ENCODE measurements at regions of chr9 and their contacts with region 1.

Region 1: GRCh38 chr9:94672811-94673487 is 33.6 kb upstream of the FBP1 start:
- DNase-seq: no peak
- ATAC-seq: no peak
- H3K4me3 ChIP-seq: no peak overlapping the region
- H3K27ac ChIP-seq: no peak overlapping the region
- H3K4me1 ChIP-seq: peaks cover 0 to 27% (median 16%) of the 10 kb centered on the region in 12 donors
- H3K27me3 ChIP-seq: no peaks in the 10 kb centered on the region
- CTCF ChIP-seq: no peak
- POLR2A ChIP-seq: no peak

Region 2: DNA sequence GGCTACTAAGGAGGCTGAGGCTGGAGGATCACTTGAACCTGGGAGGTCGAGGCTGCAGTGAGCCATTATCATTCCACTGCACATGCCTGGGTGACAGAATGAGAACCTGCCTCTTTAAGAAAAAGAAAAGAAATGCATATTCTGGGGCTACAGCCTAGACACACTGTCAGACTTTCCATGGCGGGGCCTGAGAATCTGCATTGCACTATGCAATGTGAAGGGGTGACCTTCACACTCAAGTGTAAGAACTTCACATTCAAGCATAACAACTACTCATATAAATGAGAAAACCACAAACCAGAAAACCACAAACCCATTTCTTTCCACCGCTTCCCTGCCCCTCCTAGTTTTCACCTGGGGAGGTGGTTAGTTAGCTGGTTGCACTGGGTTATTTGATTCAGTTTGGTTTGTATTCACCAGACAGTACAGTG is 61.3 kb before region 1 on chr9:
- intact Hi-C with region 1: no loop called
- DNase-seq: no peak
- ATAC-seq: no peak
- H3K4me3 ChIP-seq: no peak overlapping the region
- H3K27ac ChIP-seq: no peak overlapping the region
- H3K4me1 ChIP-seq: peaks cover 0 to 4% (median 0%) of the 10 kb centered on the region in 12 donors
- H3K27me3 ChIP-seq: peaks cover 0 to 5% (median 0%) of the 10 kb centered on the region in 9 donors
- CTCF ChIP-seq: no peak
- POLR2A ChIP-seq: no peak

Region 3: DNA sequence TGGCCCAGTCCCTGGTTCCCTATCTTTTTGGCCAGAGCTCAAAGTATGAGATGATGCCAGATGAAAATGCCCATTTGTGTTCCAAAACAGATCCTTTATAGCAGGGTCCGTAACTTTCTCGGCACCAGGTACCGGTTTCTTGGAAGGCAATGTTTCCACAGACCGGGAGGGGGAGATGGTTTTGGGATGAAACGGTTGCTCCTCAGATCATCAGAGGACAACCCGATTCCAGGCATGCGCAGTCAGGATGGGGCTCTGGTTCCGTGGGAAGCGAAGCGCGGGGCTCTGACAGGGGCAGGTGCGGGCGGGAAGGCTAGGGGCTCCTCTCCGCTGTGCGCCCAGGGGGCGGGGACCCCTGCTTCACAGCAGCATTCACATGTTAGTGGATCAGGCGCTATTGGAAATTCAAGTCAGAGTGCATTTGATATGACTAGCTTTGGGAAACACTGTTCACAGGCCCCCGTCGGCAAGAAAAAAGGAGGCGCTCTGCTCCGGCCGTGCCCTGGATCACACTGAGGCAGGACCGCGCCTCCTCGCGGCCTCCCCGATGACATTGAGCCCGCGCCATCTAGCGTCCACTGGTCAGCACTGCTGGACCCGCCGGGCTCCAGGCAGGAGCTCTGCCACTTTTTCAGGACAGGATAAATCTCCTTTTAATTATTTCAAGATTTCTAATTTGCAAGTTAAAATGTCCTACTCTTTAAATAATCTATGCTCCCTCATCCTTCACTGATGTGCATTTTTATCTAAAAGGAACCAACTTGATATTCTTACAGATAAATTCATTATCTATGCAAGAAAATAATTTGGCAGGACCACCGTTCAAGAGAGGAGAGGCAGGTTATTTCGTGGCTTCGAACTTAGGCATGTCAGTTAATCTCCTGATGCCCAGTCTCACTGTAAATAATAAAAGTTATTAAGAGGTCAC is 454.6 kb after region 1 on chr9:
- intact Hi-C with region 1: loop called in 2 of 10 experiments (anchors 5 kb)
- DNase-seq: peak; percentile 86 to 92 (median 88)
- ATAC-seq: peak; percentile 83 to 91 (median 89)
- H3K4me3 ChIP-seq: peak overlapping the region in 11 of 12 donors; percentile 8 to 58 (median 45)
- H3K27ac ChIP-seq: peak overlapping the region in 4 of 12 donors; percentile 25 to 59 (median 48)
- H3K4me1 ChIP-seq: peaks cover 0 to 24% (median 8%) of the 10 kb centered on the region in 12 donors
- H3K27me3 ChIP-seq: no peaks in the 10 kb centered on the region
- CTCF ChIP-seq: peak; percentile 92 to 99 (median 98)
- POLR2A ChIP-seq: no peak

Region 4: DNA sequence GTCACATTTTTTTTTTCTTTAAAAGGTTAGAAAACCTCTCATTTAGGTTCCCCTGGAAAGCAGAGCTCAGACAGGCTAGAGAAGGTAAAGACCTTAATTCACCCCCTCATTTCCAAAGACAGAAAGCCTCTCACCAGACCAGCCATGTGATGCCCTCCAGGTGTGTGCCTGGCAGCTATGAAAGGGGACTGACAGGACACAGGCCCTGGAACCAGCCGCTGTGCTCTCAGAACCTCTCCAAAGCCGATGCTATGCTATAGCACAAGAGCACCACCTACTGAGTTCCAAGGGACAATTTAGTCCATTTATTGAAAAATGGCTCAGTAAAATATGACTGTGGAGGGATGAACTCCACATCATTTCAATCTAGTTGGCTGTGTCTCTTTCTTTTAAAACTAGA is 595.7 kb after region 1 on chr9:
- intact Hi-C with region 1: loop called in 3 of 10 experiments (anchors 5 to 10 kb)
- DNase-seq: peak in 1 of 5 donors; percentile 20
- ATAC-seq: peak; percentile 37 to 86 (median 74)
- H3K4me3 ChIP-seq: no peak overlapping the region
- H3K27ac ChIP-seq: no peak overlapping the region
- H3K4me1 ChIP-seq: peaks cover 0 to 2% (median 0%) of the 10 kb centered on the region in 12 donors
- H3K27me3 ChIP-seq: no peaks in the 10 kb centered on the region
- CTCF ChIP-seq: peak in 11 of 12 donors; percentile 19 to 60 (median 38)
- POLR2A ChIP-seq: no peak